Mammary epithelial cell (primary cell): ENCODE measurements at regions of chr1 and their contacts with region 1.

Region 1: GRCh38 chr1:27154991-27155781 is at the start of gene SLC9A1:
- DNase-seq: peak; percentile 89
- H3K4me3 ChIP-seq: peak within 1 kb of the TSS; percentile 66 to 76 (median 69)
- H3K27ac ChIP-seq: peak within 1 kb of the TSS; percentile 89
- H3K4me1 ChIP-seq: peaks cover 37% of the 10 kb centered on the region
- H3K27me3 ChIP-seq: no peaks in the 10 kb centered on the region
- CTCF ChIP-seq: peak; percentile 72 to 91
- total RNA-seq, gene SLC9A1: 9.5 to 124 TPM

Region 2: DNA sequence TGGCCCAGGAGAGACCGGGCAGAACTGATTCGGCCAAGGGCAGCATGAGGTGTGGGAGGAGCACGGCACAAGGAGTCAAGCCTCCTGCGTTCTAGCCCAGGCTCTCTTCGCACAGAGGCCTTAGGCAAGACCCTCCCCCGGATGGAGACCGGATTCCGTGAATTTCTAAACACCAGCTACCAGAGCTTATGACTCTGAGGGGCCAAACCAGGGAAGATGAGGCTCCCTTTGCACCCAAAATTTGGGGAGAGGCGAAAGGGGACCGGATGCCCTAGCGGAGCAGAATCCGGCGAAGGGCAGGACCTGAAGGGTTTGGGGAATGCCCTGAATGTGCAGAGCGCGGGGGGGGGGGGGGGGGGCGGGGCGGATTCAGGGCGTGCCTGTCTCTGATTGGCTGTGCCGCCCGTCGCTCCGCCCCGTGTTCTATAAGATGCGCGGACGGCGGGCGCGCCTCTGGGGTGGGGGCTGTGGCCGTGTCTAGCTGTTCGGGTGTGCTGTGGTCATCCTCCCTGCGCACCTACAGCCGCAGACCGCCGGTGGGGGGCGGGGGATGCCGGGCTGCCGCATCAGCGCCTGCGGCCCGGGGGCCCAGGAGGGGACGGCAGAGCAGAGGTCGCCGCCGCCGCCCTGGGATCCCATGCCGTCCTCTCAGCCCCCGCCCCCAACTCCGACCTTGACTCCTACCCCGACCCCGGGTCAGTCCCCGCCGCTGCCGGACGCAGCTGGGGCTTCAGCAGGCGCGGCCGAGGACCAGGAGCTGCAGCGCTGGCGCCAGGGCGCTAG is 161.8 kb before region 1 on chr1 and contains the start of gene TRNP1:
- CTCF ChIA-PET with region 1: no interaction called
- dilution Hi-C with region 1: no loop called
- in situ Hi-C with region 1: no loop called
- intact Hi-C with region 1: loop called (anchors 1 kb)
- DNase-seq: peak; percentile 78
- H3K4me3 ChIP-seq: peak within 1 kb of the TSS; percentile 79 to 92 (median 83)
- H3K27ac ChIP-seq: peak within 1 kb of the TSS; percentile 90
- H3K4me1 ChIP-seq: peaks cover 57% of the 10 kb centered on the region
- H3K27me3 ChIP-seq: no peaks in the 10 kb centered on the region
- CTCF ChIP-seq: no peak
- total RNA-seq, gene TRNP1: 99.0 to 142 TPM

Region 3: GRCh38 chr1:27102707-27103491 is 52.3 kb before region 1 on chr1:
- CTCF ChIA-PET with region 1: no interaction called
- dilution Hi-C with region 1: no loop called
- in situ Hi-C with region 1: no loop called
- intact Hi-C with region 1: loop called (anchors 2 kb)
- DNase-seq: peak; percentile 45
- H3K4me3 ChIP-seq: no peak overlapping the region
- H3K27ac ChIP-seq: no peak overlapping the region
- H3K4me1 ChIP-seq: peaks cover 40% of the 10 kb centered on the region
- H3K27me3 ChIP-seq: no peaks in the 10 kb centered on the region
- CTCF ChIP-seq: peak; percentile 82 to 94

Region 4: DNA sequence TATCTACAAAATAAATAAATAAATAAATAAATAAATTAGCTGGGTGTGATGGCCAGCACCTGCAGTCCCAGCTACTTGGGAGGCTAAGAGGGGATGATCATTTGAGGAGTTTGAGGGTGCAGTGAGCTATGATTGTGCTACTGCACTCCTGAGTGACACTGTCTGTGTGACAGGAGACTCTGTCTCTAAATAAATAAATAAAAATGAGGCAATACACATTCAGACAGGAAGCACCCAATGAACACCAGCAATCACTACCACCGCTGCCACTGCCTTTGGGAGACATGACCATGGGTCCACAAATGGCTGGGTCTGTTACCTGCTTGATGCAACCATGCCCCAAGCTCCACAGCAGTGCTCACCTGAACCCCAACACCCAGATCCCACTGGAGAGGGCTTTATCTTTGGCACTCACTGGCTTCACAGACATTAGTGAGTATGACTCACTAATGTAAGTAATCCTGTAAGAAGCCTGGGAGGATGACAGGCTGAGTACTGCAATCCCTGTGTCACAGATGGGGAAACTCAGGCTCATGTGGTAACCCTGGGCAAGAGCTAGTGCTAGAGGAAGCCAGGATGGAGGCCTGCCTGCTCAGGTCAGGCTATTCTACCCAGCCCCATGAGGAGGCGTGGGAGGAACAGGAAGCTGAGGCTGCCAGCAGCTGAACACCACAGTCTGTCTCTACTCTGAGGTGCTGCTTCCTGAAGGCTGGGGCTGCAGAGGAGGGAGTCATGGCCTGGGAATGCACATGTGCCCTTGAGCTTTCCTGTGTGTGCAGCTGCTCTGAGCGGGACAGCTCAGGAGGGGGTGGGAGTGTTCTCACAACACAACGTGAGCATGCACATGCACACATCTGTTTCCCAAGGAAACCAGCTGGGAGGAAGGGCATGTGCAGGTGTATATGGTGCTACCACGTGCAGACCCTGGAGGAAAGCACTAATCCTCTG is 43.3 kb before region 1 on chr1:
- CTCF ChIA-PET with region 1: interaction called, 23 read pairs
- dilution Hi-C with region 1: no loop called
- in situ Hi-C with region 1: loop called in 1 of 2 experiments (anchors 5 kb)
- intact Hi-C with region 1: loop called (anchors 1 kb)
- DNase-seq: peak; percentile 100
- H3K4me3 ChIP-seq: no peak overlapping the region
- H3K27ac ChIP-seq: peak overlapping the region; percentile 43
- H3K4me1 ChIP-seq: peaks cover 35% of the 10 kb centered on the region
- H3K27me3 ChIP-seq: no peaks in the 10 kb centered on the region
- CTCF ChIP-seq: peak; percentile 8 to 65